Activated CD8-positive, alpha-beta T cell treated with anti-CD3 and anti-CD28 coated beads for 36 hours (primary cell): ENCODE measurements at regions of chr12 and their contacts with region 1.

Region 1: DNA sequence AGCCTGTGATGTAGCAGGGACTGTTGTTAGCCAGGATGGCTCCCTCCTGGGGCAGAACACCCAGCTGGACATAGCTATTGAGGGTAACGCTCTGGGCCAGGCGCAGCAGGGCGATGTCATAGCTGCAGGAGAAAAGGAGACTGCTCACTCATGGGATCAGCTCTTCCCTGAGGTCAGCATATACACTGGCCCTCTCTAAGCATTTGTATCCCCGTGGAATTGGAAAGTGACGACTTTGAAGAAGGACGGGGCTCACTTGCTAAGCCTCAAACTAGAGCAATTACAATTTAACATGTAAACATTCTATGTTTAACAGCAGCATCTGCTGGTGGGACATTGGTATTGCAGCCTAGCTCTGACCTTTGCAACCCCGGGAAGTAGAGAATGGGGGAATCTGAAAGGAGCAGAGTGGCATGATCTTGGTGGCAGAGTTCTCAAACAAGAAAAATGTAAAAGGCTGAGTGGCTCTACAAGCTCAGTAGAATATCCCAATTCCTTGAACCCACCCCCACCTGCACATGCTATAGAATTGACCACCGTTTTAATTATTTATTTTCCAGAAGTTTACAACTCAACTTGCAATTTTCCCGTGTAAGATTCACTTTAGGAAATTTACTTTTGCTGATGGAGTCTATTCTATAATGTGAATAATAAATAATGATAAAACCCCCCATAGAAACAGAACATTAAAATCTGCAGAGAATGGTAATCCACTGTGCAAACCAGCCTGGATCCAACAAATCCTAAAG is 5.0 kb downstream of the CELA1 start:
- DNase-seq: peak; percentile 83
- ATAC-seq: peak; percentile 97
- H3K4me3 Mint-ChIP-seq: no peak overlapping the region
- H3K27ac Mint-ChIP-seq: peak overlapping the region; percentile 31
- H3K4me1 Mint-ChIP-seq: peaks cover 17% of the 10 kb centered on the region
- H3K27me3 Mint-ChIP-seq: no peaks in the 10 kb centered on the region
- CTCF ChIP-seq: peak; percentile 97

Region 2: DNA sequence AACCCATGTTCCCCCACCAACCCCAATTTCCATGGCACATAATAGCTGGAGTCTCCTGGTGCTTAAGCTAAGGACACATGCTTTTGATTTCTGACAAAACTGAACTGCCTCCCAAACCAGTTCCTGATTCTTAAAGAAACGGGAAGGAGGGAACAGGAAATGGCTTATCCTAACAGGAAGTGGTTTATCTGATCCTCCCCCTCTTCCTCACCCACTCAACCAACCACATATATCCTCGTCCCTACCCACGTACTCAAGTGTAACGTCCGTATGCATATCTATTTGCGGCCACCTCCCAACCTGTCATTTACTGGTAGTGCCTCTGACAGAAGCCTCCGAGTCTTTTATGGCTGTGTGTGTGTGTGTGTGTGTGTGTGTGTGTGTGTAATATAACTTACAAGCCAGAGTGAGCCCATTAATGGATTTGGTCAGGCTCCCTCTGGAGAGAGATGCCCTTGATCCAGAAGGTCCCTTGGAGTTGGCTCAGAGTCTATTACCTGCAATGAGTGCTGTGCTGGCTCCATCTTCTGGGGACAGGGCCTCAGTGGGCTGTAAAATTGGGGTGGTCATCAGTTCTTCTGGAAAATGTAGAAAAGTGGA is 95.1 kb before region 1 on chr12:
- CTCF ChIA-PET with region 1: interaction called, 18 read pairs
- POLR2A ChIA-PET with region 1: no interaction called
- intact Hi-C with region 1: no loop called
- DNase-seq: peak; percentile 60
- ATAC-seq: peak; percentile 75
- H3K4me3 Mint-ChIP-seq: no peak overlapping the region
- H3K27ac Mint-ChIP-seq: peak overlapping the region; percentile 82
- H3K4me1 Mint-ChIP-seq: peaks cover 44% of the 10 kb centered on the region
- H3K27me3 Mint-ChIP-seq: no peaks in the 10 kb centered on the region
- CTCF ChIP-seq: no peak

Region 3: DNA sequence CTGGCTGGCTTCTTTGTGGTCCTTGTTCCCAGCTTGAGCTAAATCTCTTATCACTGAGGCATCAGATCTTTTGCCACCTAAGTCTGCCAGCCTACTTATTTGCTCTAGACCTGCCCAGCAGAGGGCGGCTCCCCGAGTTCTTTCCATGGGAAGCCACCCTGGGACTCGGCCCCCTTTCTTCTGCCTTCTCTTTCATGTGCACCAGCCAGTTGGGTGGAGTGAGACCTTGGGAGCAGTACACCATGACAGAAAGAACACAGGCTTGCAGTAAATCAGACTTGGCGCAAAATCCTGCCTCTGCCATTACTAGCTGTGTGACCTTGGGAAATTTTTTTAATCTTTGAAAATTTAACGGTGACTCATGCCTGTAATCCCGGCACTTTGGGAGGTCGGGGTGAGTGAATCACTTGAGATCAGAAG is 78.7 kb before region 1 on chr12:
- CTCF ChIA-PET with region 1: interaction called, 117 read pairs
- POLR2A ChIA-PET with region 1: interaction called, 3 read pairs
- intact Hi-C with region 1: loop called (anchors 5 kb)
- DNase-seq: peak; percentile 51
- ATAC-seq: no peak
- H3K4me3 Mint-ChIP-seq: no peak overlapping the region
- H3K27ac Mint-ChIP-seq: no peak overlapping the region
- H3K4me1 Mint-ChIP-seq: peaks cover 18% of the 10 kb centered on the region
- H3K27me3 Mint-ChIP-seq: no peaks in the 10 kb centered on the region
- CTCF ChIP-seq: no peak

Region 4: GRCh38 chr12:51281202-51281924 is 60.1 kb before region 1 on chr12:
- CTCF ChIA-PET with region 1: interaction called, 11 read pairs
- POLR2A ChIA-PET with region 1: no interaction called
- intact Hi-C with region 1: no loop called
- DNase-seq: no peak
- ATAC-seq: no peak
- H3K4me3 Mint-ChIP-seq: no peak overlapping the region
- H3K27ac Mint-ChIP-seq: peak overlapping the region; percentile 71
- H3K4me1 Mint-ChIP-seq: peaks cover 6% of the 10 kb centered on the region
- H3K27me3 Mint-ChIP-seq: no peaks in the 10 kb centered on the region
- CTCF ChIP-seq: no peak

Region 5: GRCh38 chr12:51307655-51308593 is 33.5 kb before region 1 on chr12:
- CTCF ChIA-PET with region 1: interaction called, 22 read pairs
- POLR2A ChIA-PET with region 1: no interaction called
- intact Hi-C with region 1: no loop called
- DNase-seq: no peak
- ATAC-seq: no peak
- H3K4me3 Mint-ChIP-seq: no peak overlapping the region
- H3K27ac Mint-ChIP-seq: peak overlapping the region; percentile 15
- H3K4me1 Mint-ChIP-seq: peaks cover 57% of the 10 kb centered on the region
- H3K27me3 Mint-ChIP-seq: no peaks in the 10 kb centered on the region
- CTCF ChIP-seq: no peak

Region 6: DNA sequence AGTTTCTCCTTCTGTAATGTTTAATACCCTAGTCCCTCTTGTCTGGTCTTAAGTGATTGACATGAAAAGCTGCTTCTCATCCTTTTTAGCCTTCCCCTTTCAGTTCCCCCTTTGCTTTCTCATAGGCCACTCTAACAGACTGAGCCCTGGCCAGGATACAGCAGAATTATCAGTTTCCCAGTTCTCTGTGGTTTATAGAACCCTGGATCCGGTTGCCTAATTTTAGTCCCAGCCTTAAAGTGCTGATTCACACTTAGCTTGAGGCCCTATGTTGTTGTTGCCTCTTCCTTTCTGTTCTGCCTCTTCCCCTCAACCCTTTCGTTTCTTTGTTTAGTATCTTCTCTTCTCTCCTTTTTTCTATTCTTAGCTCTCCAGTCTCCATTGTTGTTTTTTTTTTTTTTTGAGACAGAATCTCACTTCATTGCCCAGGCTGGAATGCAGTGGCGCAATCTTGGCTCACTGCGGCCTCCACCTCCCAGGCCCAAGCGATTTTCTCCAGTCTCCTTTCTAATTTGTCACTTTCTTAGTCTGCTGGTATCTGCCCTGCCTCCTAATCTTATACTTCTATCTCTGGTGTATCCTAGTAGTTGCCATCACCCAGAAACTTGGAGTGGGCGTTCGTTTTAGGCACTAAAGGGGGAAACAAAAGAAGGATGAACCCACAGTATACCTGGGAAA is 14.5 kb before region 1 on chr12:
- CTCF ChIA-PET with region 1: interaction called, 38 read pairs
- POLR2A ChIA-PET with region 1: interaction called, 8 read pairs
- intact Hi-C with region 1: no loop called
- DNase-seq: no peak
- ATAC-seq: no peak
- H3K4me3 Mint-ChIP-seq: peak overlapping the region; percentile 23
- H3K27ac Mint-ChIP-seq: peak overlapping the region; percentile 94
- H3K4me1 Mint-ChIP-seq: peaks cover 57% of the 10 kb centered on the region
- H3K27me3 Mint-ChIP-seq: no peaks in the 10 kb centered on the region
- CTCF ChIP-seq: no peak

Region 7: DNA sequence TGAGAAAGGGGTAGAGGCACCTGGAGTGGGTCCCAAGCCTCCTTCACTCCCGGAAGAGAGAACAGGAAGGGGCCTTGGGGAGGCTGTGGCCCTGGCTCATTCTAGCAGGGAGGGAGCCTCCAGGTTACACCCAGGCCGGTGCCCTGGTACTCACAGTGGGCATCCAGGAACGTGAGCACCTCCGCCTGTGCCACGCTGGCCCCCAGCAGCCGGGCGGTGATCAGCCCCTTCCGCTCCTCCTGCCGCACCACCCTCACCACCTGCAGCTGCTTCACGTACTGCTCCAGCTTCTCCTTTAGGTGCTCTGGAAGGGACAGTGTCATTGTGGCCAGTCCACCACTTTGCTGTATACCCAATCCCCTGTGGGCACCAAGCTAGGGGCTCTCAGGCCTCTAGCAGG is 23.8 kb after region 1 on chr12:
- CTCF ChIA-PET with region 1: interaction called, 10 read pairs
- POLR2A ChIA-PET with region 1: interaction called, 4 read pairs
- intact Hi-C with region 1: no loop called
- DNase-seq: no peak
- ATAC-seq: no peak
- H3K4me3 Mint-ChIP-seq: no peak overlapping the region
- H3K27ac Mint-ChIP-seq: no peak overlapping the region
- H3K4me1 Mint-ChIP-seq: peaks cover 26% of the 10 kb centered on the region
- H3K27me3 Mint-ChIP-seq: no peaks in the 10 kb centered on the region
- CTCF ChIP-seq: no peak